ENCODE measurements at regions of chr6 and their contacts with region 1.

Region 1: DNA sequence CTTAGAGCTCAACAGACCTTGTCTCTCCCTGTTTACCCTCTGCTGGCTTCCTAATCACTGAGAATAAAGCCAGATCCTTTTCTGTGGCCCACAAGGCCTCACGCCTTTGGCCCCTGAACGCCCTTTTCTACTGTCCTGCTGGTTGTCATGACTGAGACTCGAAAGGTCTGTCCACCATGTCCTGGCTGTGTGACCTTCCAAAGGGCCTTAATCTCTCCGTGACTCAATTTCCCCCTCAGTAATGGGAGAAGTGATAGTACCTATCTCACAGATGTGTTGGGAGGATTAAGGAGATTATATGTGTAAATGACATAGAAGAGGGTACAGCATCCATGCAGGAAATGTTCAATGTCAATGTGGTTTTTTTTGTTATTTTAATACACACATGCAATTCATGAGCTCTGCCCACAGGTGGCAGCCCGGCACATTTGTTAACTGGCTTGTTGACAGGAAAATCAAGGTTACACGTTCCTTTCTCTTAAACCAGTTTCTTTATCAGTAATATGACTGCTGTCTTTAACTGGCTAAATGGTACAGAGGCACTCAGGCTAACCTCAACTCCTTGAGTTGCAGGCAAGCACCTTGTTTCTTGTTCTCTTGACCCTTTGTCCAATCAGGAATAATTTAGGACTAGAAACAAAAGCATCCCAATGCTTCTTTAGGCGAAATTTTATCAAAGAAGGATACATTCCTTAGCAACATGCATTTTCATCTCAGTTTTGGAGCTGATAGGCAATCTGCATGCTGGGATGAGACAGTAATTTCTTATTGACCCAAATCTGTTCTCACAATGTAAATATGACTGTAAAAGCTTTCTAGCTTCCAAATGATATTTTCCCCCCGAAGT is 16.6 kb downstream of the SLC22A1 start:
- DNase-seq: peak; percentile 73
- H3K4me3 ChIP-seq: no peak overlapping the region
- H3K27ac ChIP-seq: peak overlapping the region in 3 of 4 donors; percentile 82 to 89 (median 87)
- H3K4me1 ChIP-seq: peaks cover 0 to 50% (median 42%) of the 10 kb centered on the region in 4 donors
- H3K27me3 ChIP-seq: no peaks in the 10 kb centered on the region
- CTCF ChIP-seq: peak; percentile 54 to 84 (median 74)
- EP300 ChIP-seq: no peak
- POLR2A ChIP-seq: no peak

Region 2: DNA sequence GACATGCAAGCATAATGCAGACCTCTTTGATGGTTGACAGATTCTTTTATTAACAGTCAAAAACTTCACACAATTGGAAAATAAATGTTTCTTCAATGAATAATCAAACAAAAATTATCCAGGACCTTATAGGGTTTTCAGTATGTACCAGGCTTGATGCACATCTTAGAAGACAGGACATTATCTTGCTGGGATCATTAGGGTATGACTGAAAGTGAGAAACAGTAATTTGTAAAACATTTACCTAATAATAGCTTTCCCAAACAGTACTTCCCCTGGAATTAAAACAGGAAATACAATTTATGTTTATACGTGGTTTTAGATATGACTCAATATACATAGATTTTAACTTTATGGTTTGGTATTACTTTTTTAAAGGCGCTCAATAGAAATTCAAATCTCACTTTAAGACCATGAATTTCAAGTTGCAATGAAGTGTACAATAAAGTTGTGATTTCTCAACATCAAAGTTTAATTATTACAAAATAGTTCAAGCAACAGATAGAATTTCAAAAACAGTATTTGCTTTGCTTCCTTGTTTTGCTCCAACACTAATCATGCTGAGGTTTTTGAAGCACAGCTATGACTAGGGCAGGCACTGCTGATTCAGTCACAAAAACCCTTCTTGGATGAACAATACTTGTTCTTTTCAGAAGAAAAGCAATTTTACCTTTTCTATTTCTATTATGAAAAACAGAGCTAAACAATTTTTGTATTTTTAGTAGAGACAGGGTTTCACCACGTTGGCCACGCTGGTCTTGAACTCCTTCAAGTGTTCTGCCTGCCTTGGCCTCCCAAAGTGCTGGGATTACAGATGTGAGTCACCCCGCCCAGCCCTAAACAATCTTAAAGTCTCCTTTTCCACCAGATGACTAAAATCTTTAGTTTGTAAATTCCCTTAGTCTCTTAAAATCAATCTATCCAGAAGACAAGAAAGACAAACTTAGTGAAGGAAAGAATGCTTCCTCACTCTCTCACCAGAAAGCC is 458.8 kb before region 1 on chr6:
- intact Hi-C with region 1: no loop called
- DNase-seq: no peak
- H3K4me3 ChIP-seq: no peak overlapping the region
- H3K27ac ChIP-seq: peak overlapping the region in 2 of 4 donors; percentile 7 to 47
- H3K4me1 ChIP-seq: peaks cover 0 to 20% (median 15%) of the 10 kb centered on the region in 4 donors
- H3K27me3 ChIP-seq: no peaks in the 10 kb centered on the region
- CTCF ChIP-seq: no peak
- EP300 ChIP-seq: no peak
- POLR2A ChIP-seq: no peak

Region 3: DNA sequence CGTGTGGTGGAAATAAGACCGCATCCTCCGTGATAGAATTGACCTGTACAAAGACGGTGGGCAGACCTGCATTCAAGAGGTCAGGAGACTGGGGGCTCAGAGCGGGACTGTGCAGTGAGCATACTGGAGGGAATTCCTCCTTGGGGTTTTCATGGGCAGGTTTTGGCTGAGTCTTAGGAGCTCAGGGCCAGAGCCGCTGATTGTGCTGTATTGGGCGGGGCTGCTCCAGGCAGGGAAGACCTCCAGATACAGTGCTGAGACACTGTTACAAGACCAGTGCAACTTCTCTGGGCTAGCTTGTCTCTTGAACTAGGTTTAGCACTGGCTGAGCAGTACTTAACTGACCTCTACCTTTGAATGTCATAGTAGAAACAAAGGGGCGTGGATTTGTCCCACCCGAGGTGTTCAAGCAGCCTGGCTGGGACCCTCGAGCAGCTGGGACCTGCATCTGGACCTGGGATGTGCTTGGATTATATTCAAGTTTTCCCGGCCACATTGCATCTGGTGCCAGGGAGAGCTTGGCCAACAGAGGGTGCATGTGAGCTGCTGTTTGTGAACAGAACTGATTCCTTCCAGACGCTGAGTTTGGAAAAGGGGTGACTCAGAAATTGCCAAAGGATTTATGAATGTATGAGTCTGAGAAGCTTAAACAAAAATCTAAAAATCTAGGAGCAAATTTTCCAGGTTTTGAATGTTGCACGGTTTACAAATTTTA is 50.0 kb before region 1 on chr6:
- intact Hi-C with region 1: loop called (anchors 2 kb)
- DNase-seq: peak; percentile 86
- H3K4me3 ChIP-seq: no peak overlapping the region
- H3K27ac ChIP-seq: peak overlapping the region; percentile 39 to 75 (median 62)
- H3K4me1 ChIP-seq: peaks cover 0 to 21% (median 12%) of the 10 kb centered on the region in 4 donors
- H3K27me3 ChIP-seq: no peaks in the 10 kb centered on the region
- CTCF ChIP-seq: peak; percentile 57 to 80 (median 70)
- EP300 ChIP-seq: no peak
- POLR2A ChIP-seq: no peak

Region 4: GRCh38 chr6:160254467-160255312 is 116.5 kb after region 1 on chr6:
- intact Hi-C with region 1: loop called (anchors 10 kb)
- DNase-seq: no peak
- H3K4me3 ChIP-seq: no peak overlapping the region
- H3K27ac ChIP-seq: no peak overlapping the region
- H3K4me1 ChIP-seq: peaks cover 0 to 32% (median 23%) of the 10 kb centered on the region in 4 donors
- H3K27me3 ChIP-seq: no peaks in the 10 kb centered on the region
- CTCF ChIP-seq: no peak
- EP300 ChIP-seq: no peak
- POLR2A ChIP-seq: no peak

Region 5: GRCh38 chr6:160348142-160349019 is 210.2 kb after region 1 on chr6 and contains the start of gene SLC22A3:
- intact Hi-C with region 1: loop called (anchors 1 kb)
- DNase-seq: peak; percentile 77
- H3K4me3 ChIP-seq: peak within 1 kb of the TSS; percentile 57 to 87 (median 74)
- H3K27ac ChIP-seq: peak within 1 kb of the TSS; percentile 81 to 89 (median 84)
- H3K4me1 ChIP-seq: peaks cover 0 to 29% (median 16%) of the 10 kb centered on the region in 4 donors
- H3K27me3 ChIP-seq: no peaks in the 10 kb centered on the region
- CTCF ChIP-seq: peak in 3 of 4 experiments; percentile 15 to 43 (median 42)
- EP300 ChIP-seq: no peak
- POLR2A ChIP-seq: no peak
- total RNA-seq, gene SLC22A3: 13.6 to 26.3 (median 19.3) TPM

Region 6: DNA sequence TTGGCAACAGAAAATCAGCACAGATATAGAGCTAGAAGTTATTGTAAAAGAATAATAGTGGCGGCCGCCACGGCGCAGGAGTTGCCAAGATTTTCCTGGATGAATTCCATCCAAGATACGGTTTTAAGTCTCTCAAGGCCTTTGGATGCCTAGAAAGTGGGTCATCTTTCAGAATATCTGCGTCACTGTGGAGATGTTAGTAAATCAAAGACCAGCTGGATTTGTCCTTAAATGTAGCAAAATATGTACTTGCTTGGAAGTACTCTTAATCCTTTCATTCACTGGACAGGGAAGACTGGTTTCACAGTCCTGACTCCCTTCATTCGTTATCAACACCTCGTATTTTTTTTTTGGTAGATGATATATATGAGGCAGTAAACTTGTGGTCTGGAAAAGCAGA is 293.0 kb after region 1 on chr6:
- intact Hi-C with region 1: loop called (anchors 5 kb)
- DNase-seq: peak; percentile 88
- H3K4me3 ChIP-seq: no peak overlapping the region
- H3K27ac ChIP-seq: peak overlapping the region; percentile 45 to 85 (median 74)
- H3K4me1 ChIP-seq: peaks cover 0 to 55% (median 49%) of the 10 kb centered on the region in 4 donors
- H3K27me3 ChIP-seq: no peaks in the 10 kb centered on the region
- CTCF ChIP-seq: no peak
- EP300 ChIP-seq: peak; percentile 69 to 95 (median 84)
- POLR2A ChIP-seq: no peak

Measured in sigmoid colon (tissue), 7 donors.